Heart right ventricle (tissue), 16 donors: ENCODE measurements at regions of chr1 and their contacts with region 1.

Region 1: DNA sequence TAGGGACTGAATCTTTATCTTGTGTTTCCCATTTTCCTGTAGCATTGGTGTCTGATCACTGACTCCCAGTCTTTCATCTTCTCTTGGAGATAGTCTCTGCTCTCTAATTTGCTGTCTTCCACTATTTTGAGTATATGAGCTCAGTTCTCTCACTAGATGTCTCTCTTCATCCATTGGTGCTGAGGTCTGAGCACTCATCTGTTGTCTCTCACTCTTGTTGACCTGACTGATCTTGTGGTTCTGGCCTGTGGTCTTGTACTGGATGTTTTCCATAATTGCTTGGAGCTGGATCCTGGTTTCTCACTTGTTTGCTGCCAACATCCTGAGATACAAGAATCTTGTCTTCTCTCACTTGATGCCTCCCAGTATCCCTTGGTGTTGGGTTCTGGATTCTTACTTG is 25.1 kb upstream of the S100A11 start:
- DNase-seq: no peak
- ATAC-seq: no peak
- H3K4me3 ChIP-seq: no peak overlapping the region
- H3K27ac ChIP-seq: no peak overlapping the region
- H3K4me1 ChIP-seq: no peaks in the 10 kb centered on the region
- H3K27me3 ChIP-seq: peaks cover 0 to 70% (median 43%) of the 10 kb centered on the region in 7 donors
- CTCF ChIP-seq: no peak

Region 2: DNA sequence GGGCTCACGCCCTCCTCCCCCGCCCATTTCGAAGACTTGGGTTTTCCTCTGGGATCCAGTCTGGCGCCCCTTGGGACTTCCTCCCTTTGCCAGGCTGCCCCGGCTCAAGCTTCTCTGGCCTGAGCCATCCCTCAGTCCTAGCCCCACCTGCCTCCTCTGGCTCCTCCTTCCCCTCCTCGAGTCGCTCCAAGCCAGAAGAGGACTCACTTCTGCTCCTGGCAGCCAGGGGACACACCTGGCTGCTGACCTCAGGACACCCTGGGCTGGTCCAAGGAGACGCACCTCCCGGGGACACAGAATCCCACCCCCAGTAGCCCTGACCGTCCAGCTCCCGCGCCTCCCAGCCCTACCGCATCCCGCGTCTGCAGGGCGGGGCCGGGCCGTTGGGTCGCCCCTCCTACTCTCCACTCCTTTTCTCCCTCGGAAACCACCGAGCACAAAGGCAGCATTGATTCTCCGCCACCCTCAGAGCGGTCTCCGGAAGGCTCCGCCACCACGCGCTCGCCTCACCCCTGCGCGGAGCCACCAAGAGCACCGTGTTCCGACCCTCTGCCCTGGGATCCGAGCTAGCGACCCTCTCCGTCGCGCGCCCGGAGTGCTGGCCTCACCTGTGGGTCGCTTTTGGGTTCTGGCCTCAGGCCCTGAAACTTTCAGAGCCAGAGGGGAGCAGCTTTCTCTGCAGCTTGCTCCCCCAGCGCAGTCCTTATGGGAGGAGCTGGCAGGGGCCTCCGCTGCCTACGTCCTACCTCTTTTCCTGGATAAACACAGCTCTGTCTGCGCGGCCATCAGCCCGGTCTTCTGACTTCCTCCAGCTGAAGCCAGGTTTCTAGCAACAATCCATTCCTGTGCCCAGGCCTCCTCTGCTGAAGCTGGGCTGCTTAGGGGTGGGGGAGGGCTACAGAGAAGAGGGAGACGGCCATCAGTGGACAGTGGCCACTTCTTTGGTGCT is 222.2 kb before region 1 on chr1 and contains the start of gene C2CD4D:
- intact Hi-C with region 1: no loop called
- DNase-seq: peak in 1 of 2 donors; percentile 31
- ATAC-seq: peak; percentile 45 to 69 (median 58)
- H3K4me3 ChIP-seq: peak within 1 kb of the TSS in 9 of 10 donors; percentile 36 to 58 (median 50)
- H3K27ac ChIP-seq: peak within 1 kb of the TSS in 5 of 10 donors; percentile 20 to 56 (median 47)
- H3K4me1 ChIP-seq: peaks cover 6 to 29% (median 21%) of the 10 kb centered on the region in 9 donors
- H3K27me3 ChIP-seq: peaks cover 13 to 66% (median 44%) of the 10 kb centered on the region in 7 donors
- CTCF ChIP-seq: no peak
- total RNA-seq, gene C2CD4D: not detected

Region 3: GRCh38 chr1:152459596-152460528 is 397.9 kb after region 1 on chr1:
- intact Hi-C with region 1: loop called in 1 of 10 experiments (anchors 10 kb)
- DNase-seq: peak; percentile 55 to 79
- ATAC-seq: peak in 7 of 8 donors; percentile 51 to 77 (median 69)
- H3K4me3 ChIP-seq: peak overlapping the region in 4 of 10 donors; percentile 3 to 33 (median 24)
- H3K27ac ChIP-seq: peak overlapping the region in 3 of 10 donors; percentile 12 to 82 (median 16)
- H3K4me1 ChIP-seq: peaks cover 0 to 12% (median 4%) of the 10 kb centered on the region in 9 donors
- H3K27me3 ChIP-seq: peaks cover 0 to 3% (median 0%) of the 10 kb centered on the region in 7 donors
- CTCF ChIP-seq: peak; percentile 66 to 83 (median 77)